CD4-positive, alpha-beta T cell (primary cell): ENCODE measurements at regions of chr2 and their contacts with region 1.

Region 1: GRCh38 chr2:232521959-232522622 is 1.9 kb downstream of the PRSS56 start:
- DNase-seq: peak; percentile 36 to 83 (median 64)
- ATAC-seq: peak; percentile 76
- H3K4me3 ChIP-seq: peak overlapping the region; percentile 34
- H3K4me3 Mint-ChIP-seq: no peak overlapping the region
- H3K27ac ChIP-seq: no peak overlapping the region
- H3K27ac Mint-ChIP-seq: no peak overlapping the region
- H3K4me1 ChIP-seq: peaks cover 28% of the 10 kb centered on the region
- H3K4me1 Mint-ChIP-seq: peaks cover 6% of the 10 kb centered on the region
- H3K27me3 ChIP-seq: peaks cover 43 to 44% of the 10 kb centered on the region in 2 experiments
- H3K27me3 Mint-ChIP-seq: peaks cover 53% of the 10 kb centered on the region
- CTCF ChIP-seq: peak; percentile 79

Region 2: DNA sequence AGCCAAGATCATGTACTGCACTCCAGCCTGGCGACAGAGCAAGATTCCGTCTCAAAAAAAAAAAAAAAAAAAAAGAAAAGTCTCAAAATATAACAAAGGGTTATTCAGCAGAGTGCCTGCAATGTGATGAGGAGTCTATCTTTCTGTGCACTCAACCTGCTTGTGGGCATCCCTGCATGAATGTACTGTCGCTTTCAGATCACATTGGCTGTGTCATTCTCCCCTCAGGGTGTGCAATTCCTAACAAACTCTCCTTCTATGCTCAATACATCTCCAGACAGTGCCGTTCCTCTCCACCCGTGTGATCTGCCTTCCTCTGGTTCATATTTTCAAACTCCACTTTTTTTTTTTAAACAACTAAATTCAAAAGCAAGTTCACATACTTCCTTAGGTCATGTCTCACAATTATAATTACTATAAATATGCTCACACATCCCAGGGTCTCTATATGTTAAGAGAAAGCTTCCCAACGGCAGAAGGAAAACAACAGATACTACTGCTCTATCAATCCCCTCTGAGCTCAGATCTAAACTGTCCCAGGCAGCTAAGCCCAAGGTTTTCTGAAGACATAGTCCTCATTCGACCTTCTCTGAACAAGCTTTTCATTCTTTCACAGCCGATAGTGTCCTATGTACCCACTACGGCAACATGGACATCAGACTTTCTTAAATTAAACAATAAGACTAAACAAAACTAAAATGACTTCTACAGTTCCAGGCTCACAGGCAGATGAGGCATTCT is 778.5 kb before region 1 on chr2:
- CTCF ChIA-PET with region 1: no interaction called
- POLR2A ChIA-PET with region 1: no interaction called
- intact Hi-C with region 1: no loop called
- DNase-seq: no peak
- ATAC-seq: no peak
- H3K4me3 ChIP-seq: no peak overlapping the region
- H3K4me3 Mint-ChIP-seq: no peak overlapping the region
- H3K27ac ChIP-seq: no peak overlapping the region
- H3K27ac Mint-ChIP-seq: no peak overlapping the region
- H3K4me1 ChIP-seq: no peaks in the 10 kb centered on the region
- H3K4me1 Mint-ChIP-seq: no peaks in the 10 kb centered on the region
- H3K27me3 ChIP-seq: no peaks in the 10 kb centered on the region
- H3K27me3 Mint-ChIP-seq: no peaks in the 10 kb centered on the region
- CTCF ChIP-seq: no peak

Region 3: GRCh38 chr2:231900972-231901371 is 621.1 kb before region 1 on chr2:
- CTCF ChIA-PET with region 1: interaction called, 3 read pairs
- POLR2A ChIA-PET with region 1: no interaction called
- intact Hi-C with region 1: loop called in 1 of 2 experiments (anchors 5 kb)
- DNase-seq: no peak
- ATAC-seq: no peak
- H3K4me3 ChIP-seq: no peak overlapping the region
- H3K4me3 Mint-ChIP-seq: no peak overlapping the region
- H3K27ac ChIP-seq: no peak overlapping the region
- H3K27ac Mint-ChIP-seq: no peak overlapping the region
- H3K4me1 ChIP-seq: peaks cover 2% of the 10 kb centered on the region
- H3K4me1 Mint-ChIP-seq: no peaks in the 10 kb centered on the region
- H3K27me3 ChIP-seq: no peaks in the 10 kb centered on the region
- H3K27me3 Mint-ChIP-seq: peaks cover 4% of the 10 kb centered on the region
- CTCF ChIP-seq: no peak

Region 4: GRCh38 chr2:231925303-231926179 is 596.5 kb before region 1 on chr2:
- CTCF ChIA-PET with region 1: no interaction called
- POLR2A ChIA-PET with region 1: no interaction called
- intact Hi-C with region 1: loop called in 1 of 2 experiments (anchors 10 kb)
- DNase-seq: peak; percentile 43 to 86 (median 62)
- ATAC-seq: peak; percentile 47
- H3K4me3 ChIP-seq: peak overlapping the region; percentile 29
- H3K4me3 Mint-ChIP-seq: no peak overlapping the region
- H3K27ac ChIP-seq: no peak overlapping the region
- H3K27ac Mint-ChIP-seq: no peak overlapping the region
- H3K4me1 ChIP-seq: peaks cover 22% of the 10 kb centered on the region
- H3K4me1 Mint-ChIP-seq: peaks cover 6% of the 10 kb centered on the region
- H3K27me3 ChIP-seq: peaks cover 40 to 58% of the 10 kb centered on the region in 2 experiments
- H3K27me3 Mint-ChIP-seq: peaks cover 55% of the 10 kb centered on the region
- CTCF ChIP-seq: peak; percentile 80

Region 5: GRCh38 chr2:232438951-232439757 is 82.9 kb before region 1 on chr2:
- CTCF ChIA-PET with region 1: interaction called, 3 read pairs
- POLR2A ChIA-PET with region 1: no interaction called
- intact Hi-C with region 1: loop called in 1 of 2 experiments (anchors 5 kb)
- DNase-seq: peak in 13 of 14 experiments; percentile 15 to 61 (median 31)
- ATAC-seq: peak; percentile 44
- H3K4me3 ChIP-seq: no peak overlapping the region
- H3K4me3 Mint-ChIP-seq: no peak overlapping the region
- H3K27ac ChIP-seq: no peak overlapping the region
- H3K27ac Mint-ChIP-seq: no peak overlapping the region
- H3K4me1 ChIP-seq: peaks cover 11% of the 10 kb centered on the region
- H3K4me1 Mint-ChIP-seq: no peaks in the 10 kb centered on the region
- H3K27me3 ChIP-seq: peaks cover 0 to 2% of the 10 kb centered on the region in 2 experiments
- H3K27me3 Mint-ChIP-seq: peaks cover 3% of the 10 kb centered on the region
- CTCF ChIP-seq: peak; percentile 77

Region 6: DNA sequence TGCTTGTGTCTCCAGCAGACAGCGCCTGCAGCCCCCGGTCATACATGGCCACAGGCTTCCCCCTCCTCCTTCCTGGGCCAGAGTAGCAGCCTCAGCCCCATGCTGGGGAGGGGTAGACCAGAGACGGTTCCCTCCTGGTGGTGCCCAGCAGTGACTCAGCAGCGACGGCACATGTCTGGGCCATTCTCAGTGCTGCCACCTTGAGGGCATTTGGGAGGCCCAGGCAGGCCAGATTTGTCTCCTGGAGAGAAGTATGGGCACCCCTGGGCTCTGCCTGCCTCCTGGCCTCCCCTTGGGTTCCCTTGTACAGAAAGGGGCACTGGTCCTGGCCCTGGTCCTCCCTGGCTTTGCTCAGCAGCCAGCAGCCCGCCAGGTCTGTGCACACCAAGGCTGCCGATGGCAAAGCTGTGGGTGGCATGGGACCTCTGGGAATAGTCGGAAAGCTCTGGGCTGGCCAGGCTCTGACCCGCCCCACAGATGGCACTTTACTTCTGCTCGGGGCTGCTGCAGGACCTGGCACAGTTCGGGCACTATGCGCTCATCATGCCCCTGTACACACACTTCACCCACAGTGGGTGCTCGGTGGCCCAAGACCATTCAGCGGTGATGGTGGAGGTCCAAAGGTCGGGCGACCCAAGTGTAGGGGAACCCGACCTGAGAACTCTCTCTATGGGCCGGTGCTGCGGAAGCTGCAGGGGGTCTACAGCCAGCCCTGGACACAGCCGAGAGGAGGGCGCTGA is 77.5 kb before region 1 on chr2:
- CTCF ChIA-PET with region 1: interaction called, 3 read pairs
- POLR2A ChIA-PET with region 1: no interaction called
- intact Hi-C with region 1: loop called (anchors 2 to 5 kb)
- DNase-seq: peak; percentile 26 to 77 (median 50)
- ATAC-seq: peak; percentile 55
- H3K4me3 ChIP-seq: no peak overlapping the region
- H3K4me3 Mint-ChIP-seq: no peak overlapping the region
- H3K27ac ChIP-seq: no peak overlapping the region
- H3K27ac Mint-ChIP-seq: no peak overlapping the region
- H3K4me1 ChIP-seq: peaks cover 11% of the 10 kb centered on the region
- H3K4me1 Mint-ChIP-seq: no peaks in the 10 kb centered on the region
- H3K27me3 ChIP-seq: no peaks in the 10 kb centered on the region
- H3K27me3 Mint-ChIP-seq: peaks cover 3% of the 10 kb centered on the region
- CTCF ChIP-seq: peak; percentile 57